Activated CD4-positive, alpha-beta T cell treated with anti-CD3 and anti-CD28 coated beads for 36 hours (primary cell): ENCODE measurements at regions of chr20 and their contacts with region 1.

Region 1: DNA sequence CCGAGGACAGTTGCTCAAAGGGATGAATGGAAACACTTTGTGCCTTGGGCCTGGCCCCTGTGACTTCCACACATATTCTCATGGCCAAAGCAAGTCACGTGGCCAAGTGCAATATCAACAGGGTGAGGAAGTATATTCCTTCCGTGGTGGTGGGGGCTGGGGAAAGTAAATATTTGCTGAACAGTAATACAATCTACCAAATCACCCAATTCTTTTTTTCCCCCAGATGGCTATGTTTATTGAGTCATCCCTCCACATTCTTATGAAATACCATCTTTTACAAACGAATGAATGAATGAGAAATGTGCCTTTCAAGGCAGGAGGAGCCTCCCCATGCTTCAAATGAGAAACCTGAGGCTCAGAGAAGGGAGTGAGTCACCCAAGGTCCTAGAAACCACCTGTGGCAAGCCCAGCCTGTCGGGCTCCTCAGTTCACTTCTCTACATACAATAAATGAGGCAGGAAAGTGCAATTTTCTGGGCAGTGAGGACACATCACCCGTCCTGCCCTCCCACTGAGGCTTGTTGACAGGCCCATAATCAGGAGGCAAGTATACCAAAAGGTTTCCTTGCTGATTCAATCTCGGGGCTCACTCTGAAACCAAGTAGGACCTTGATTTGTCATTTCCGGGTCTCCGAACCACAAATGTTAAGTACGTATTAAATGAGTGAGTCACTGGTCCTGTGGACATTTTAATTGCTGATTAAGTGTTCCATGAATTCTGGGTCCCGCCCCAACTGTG is 25.3 kb upstream of the TOP1 start:
- DNase-seq: peak; percentile 83
- ATAC-seq: peak; percentile 89
- H3K4me3 Mint-ChIP-seq: peak overlapping the region; percentile 28
- H3K27ac Mint-ChIP-seq: peak overlapping the region; percentile 89
- H3K4me1 Mint-ChIP-seq: peaks cover 37% of the 10 kb centered on the region
- H3K27me3 Mint-ChIP-seq: no peaks in the 10 kb centered on the region

Region 2: GRCh38 chr20:40945754-40946450 is 57.4 kb before region 1 on chr20:
- CTCF ChIA-PET with region 1: no interaction called
- POLR2A ChIA-PET with region 1: no interaction called
- intact Hi-C with region 1: no loop called
- DNase-seq: peak; percentile 45
- ATAC-seq: no peak
- H3K4me3 Mint-ChIP-seq: no peak overlapping the region
- H3K27ac Mint-ChIP-seq: no peak overlapping the region
- H3K4me1 Mint-ChIP-seq: no peaks in the 10 kb centered on the region
- H3K27me3 Mint-ChIP-seq: peaks cover 3% of the 10 kb centered on the region

Region 3: DNA sequence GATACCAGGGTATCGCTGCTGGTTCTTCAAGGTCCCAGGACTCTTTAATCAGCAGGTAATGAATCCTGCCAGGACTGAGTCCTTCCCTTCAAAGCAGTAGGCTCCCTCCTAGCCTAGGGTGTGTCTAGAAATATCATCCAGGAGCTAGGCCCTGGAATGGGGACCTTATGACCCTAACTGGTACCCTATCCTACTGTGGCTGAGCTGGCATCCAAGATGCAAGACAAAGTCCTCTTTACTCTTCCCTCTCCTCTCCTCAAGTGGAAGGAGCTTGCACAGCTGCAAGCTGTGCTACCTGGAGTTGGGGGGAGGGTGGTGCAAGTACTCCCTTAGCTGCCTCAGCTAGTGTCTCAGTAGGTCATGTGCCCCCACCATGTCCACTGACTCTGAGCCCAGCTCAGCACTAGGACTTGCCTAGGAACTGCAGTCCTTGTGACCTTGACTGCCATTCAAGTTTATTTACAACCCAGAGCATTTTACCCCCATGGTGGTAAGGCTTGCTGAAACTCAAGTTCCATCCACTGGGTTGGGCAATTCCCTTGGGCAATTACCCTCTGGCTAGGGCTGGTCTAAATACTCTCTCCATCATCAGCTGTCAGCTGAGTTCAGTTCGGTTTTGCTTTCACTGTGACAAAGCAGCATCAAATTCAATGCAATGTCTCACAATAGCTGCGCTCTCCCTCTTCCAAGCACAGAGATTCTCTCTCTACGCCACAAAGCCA is 23.0 kb before region 1 on chr20:
- CTCF ChIA-PET with region 1: no interaction called
- POLR2A ChIA-PET with region 1: no interaction called
- intact Hi-C with region 1: no loop called
- DNase-seq: no peak
- ATAC-seq: no peak
- H3K4me3 Mint-ChIP-seq: no peak overlapping the region
- H3K27ac Mint-ChIP-seq: no peak overlapping the region
- H3K4me1 Mint-ChIP-seq: no peaks in the 10 kb centered on the region
- H3K27me3 Mint-ChIP-seq: peaks cover 7% of the 10 kb centered on the region

Region 4: GRCh38 chr20:41047975-41048305 is 44.6 kb after region 1 on chr20:
- CTCF ChIA-PET with region 1: no interaction called
- POLR2A ChIA-PET with region 1: no interaction called
- intact Hi-C with region 1: loop called (anchors 1 to 5 kb)
- DNase-seq: no peak
- ATAC-seq: peak; percentile 46
- H3K4me3 Mint-ChIP-seq: peak overlapping the region; percentile 72
- H3K27ac Mint-ChIP-seq: peak overlapping the region; percentile 87
- H3K4me1 Mint-ChIP-seq: peaks cover 89% of the 10 kb centered on the region
- H3K27me3 Mint-ChIP-seq: no peaks in the 10 kb centered on the region

Region 5: DNA sequence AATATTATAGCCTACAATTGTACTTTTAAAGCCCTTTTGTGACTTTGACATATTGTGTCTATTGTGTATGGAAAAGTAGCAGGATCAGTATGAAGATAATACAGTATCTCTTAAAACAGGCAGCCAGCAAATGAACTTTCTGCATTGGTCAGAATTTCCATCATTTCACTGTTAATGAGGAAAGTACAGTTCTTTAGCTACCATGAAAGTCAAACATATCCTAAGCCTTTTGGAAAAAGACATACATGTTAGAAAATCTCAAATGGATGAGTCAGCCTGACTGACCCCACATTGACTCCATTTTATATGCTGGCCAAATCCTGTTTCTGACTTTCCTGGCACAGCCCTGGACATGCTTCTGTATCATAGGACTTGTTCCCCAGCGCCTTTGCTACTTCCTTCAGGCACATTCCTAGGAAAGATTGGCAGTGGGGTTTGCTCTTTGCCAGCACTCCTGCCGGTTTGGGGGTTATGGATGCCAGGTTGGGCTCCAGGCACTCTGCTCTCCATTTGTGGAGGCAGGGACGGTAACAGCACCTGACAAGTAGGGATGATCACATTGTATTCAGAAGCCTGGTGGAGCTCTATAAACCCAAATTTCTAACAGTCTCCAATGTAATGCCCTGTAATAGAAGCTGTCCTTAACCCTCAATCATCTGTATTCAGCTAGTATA is 69.0 kb after region 1 on chr20:
- CTCF ChIA-PET with region 1: no interaction called
- POLR2A ChIA-PET with region 1: no interaction called
- intact Hi-C with region 1: loop called in 1 of 2 experiments (anchors 2 kb)
- DNase-seq: no peak
- ATAC-seq: peak; percentile 31
- H3K4me3 Mint-ChIP-seq: no peak overlapping the region
- H3K27ac Mint-ChIP-seq: peak overlapping the region; percentile 70
- H3K4me1 Mint-ChIP-seq: peaks cover 79% of the 10 kb centered on the region
- H3K27me3 Mint-ChIP-seq: no peaks in the 10 kb centered on the region

Region 6: DNA sequence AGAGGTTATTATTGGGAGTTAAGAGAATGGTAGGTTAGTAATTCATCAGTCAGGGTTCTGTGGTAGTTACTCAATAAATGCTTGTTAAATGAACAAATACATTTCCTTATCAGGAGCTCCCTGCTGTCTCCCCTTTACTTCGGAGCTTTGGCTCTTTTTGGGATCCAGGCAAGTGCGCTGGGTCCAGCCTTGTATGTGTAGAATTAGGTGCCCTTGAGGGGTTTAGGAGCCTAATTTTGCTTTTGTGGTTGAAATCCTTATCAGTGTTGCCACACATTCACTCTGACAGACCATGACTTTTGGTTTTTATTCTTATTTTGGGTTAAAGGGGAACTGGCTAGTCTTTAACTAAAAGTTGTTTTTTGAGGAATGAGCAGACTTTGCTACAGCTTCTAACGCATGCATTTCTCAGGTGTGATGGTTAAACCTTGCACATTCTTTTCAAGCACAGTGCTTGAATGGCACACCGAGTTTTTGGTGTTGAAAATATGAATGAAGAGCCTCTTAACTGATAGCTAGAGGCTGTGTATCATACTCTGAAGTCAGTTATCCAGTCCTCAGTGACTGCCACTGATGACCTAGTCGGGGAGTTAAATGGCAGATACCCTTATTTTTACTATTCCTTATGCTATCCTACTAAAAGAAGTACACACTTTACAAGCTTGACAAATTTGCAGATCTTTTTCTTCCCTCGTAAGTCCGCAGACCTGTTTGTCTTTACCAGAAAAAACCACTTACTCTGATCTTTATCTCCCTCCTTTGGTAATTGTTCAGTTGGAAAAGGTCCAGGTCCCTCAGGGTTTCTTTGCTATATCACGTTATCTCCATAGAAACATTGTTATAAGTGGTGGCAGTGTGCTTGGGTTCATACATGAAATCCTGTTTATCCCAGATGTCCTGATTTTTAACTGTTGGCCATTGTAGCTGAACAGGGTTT is 83.4 kb after region 1 on chr20:
- CTCF ChIA-PET with region 1: no interaction called
- POLR2A ChIA-PET with region 1: no interaction called
- intact Hi-C with region 1: no loop called
- DNase-seq: no peak
- ATAC-seq: no peak
- H3K4me3 Mint-ChIP-seq: no peak overlapping the region
- H3K27ac Mint-ChIP-seq: peak overlapping the region; percentile 71
- H3K4me1 Mint-ChIP-seq: peaks cover 20% of the 10 kb centered on the region
- H3K27me3 Mint-ChIP-seq: no peaks in the 10 kb centered on the region

Region 7: GRCh38 chr20:41161886-41162285 is 158.6 kb after region 1 on chr20:
- CTCF ChIA-PET with region 1: no interaction called
- POLR2A ChIA-PET with region 1: no interaction called
- intact Hi-C with region 1: loop called in 1 of 2 experiments (anchors 1 kb)
- DNase-seq: no peak
- ATAC-seq: no peak
- H3K4me3 Mint-ChIP-seq: no peak overlapping the region
- H3K27ac Mint-ChIP-seq: peak overlapping the region; percentile 72
- H3K4me1 Mint-ChIP-seq: peaks cover 59% of the 10 kb centered on the region
- H3K27me3 Mint-ChIP-seq: no peaks in the 10 kb centered on the region